Naive thymus-derived CD4-positive, alpha-beta T cell (primary cell): ENCODE measurements at regions of chr2 and their contacts with region 1.

Region 1: DNA sequence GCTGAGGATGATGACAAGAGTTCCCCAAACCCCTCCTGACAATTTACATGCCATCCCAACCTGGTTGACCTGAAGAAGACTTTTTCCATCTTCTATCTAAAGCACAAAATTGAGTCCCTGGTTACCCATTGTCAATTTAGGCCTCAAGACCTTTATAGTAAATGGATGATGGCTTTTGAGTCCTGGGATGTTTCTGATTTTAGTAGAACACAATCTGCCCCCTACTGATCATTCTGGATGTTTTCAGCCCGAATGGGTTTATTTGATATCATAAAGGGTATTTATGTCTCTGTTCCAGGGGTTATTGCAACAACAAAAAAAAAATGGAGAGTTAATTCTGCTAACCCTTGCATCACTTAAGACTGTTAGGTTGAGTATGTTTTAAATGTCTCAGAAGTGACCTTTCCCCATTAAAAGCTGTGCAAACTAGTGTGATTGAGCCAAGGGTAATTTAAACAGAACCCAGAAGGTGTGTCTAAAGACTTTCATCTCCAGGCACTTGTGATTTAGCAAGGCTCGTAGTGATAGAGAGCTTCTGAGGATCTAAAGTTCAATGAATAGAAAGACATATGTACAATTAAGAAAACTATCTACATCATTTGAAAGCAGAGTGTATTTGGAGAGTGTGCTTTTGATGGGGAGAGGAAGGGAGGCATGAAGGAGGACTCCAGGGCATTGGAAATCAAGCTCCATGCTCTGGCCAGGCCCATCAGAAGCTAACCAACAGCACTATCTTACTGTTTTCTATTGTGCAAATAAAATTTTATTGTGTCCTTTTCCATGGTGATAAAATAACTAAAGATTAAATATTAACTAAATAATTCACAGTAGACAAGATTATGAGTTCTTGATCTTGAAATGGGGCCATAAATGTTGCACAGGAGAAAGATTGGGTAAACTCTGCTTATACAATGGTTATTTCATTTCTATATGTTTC is 96.6 kb upstream of the NOSTRIN start:
- DNase-seq: peak in 4 of 9 donors; percentile 4 to 31 (median 16)
- ATAC-seq: no peak
- H3K4me3 ChIP-seq: no peak overlapping the region
- H3K4me3 Mint-ChIP-seq: no peak overlapping the region
- H3K27ac ChIP-seq: no peak overlapping the region
- H3K27ac Mint-ChIP-seq: peak overlapping the region in 2 of 9 donors; percentile 3 to 42
- H3K4me1 ChIP-seq: no peaks in the 10 kb centered on the region
- H3K4me1 Mint-ChIP-seq: peaks cover 0 to 20% (median 13%) of the 10 kb centered on the region in 7 donors
- H3K27me3 ChIP-seq: no peaks in the 10 kb centered on the region
- H3K27me3 Mint-ChIP-seq: no peaks in the 10 kb centered on the region

Region 2: GRCh38 chr2:168256448-168256847 is 449.4 kb before region 1 on chr2:
- CTCF ChIA-PET with region 1: no interaction called
- POLR2A ChIA-PET with region 1: no interaction called
- intact Hi-C with region 1: loop called in 1 of 2 experiments (anchors 5 kb)
- DNase-seq: no peak
- ATAC-seq: no peak
- H3K4me3 ChIP-seq: no peak overlapping the region
- H3K4me3 Mint-ChIP-seq: no peak overlapping the region
- H3K27ac ChIP-seq: no peak overlapping the region
- H3K27ac Mint-ChIP-seq: no peak overlapping the region
- H3K4me1 ChIP-seq: peaks cover 0 to 10% of the 10 kb centered on the region in 2 donors
- H3K4me1 Mint-ChIP-seq: peaks cover 0 to 2% (median 0%) of the 10 kb centered on the region in 7 donors
- H3K27me3 ChIP-seq: no peaks in the 10 kb centered on the region
- H3K27me3 Mint-ChIP-seq: no peaks in the 10 kb centered on the region

Region 3: DNA sequence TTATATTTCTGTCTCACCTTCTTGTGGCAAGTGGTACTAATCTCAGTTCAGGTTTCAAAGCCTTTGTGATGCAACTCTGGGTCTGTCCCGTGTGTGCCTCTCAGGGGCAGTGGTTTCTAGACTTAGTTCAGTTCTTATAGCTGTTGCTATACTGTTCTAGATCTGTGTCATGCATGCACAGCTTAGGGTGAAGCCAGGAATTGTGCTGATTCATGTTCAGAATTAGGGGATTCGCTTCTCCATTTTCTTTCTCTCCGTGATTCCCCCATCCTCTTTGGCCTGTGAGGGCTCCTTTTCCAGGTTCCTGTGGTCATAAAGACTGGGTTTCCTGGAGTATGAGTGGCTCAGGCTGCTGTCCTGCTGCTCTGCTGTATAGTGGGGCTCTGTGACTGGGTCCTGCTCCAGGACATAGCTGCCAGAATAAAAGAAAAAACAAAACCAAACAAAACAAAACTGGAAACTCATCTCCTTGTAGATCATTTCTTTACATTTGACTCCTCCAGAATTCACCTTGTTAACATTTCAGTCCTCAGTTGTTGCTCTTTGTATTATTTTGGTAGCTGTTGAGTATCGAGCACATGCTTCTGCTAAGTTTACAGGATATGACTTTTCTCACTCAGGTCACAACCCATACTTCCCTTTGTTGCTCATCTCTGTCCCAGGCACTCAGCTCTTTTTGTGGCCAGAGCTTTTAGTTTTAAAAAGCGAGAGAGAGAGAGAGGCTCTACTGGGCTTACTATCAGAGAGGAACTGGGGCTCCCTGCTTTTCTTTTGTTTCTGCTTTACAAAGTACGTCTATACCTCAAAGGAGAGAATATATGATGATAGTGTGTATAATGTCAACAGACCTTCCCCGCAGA is 215.6 kb before region 1 on chr2:
- CTCF ChIA-PET with region 1: no interaction called
- POLR2A ChIA-PET with region 1: no interaction called
- intact Hi-C with region 1: no loop called
- DNase-seq: peak in 8 of 9 donors; percentile 38 to 62 (median 44)
- ATAC-seq: peak; percentile 85
- H3K4me3 ChIP-seq: peak overlapping the region; percentile 42
- H3K4me3 Mint-ChIP-seq: peak overlapping the region; percentile 65 to 90 (median 74)
- H3K27ac ChIP-seq: peak overlapping the region; percentile 55
- H3K27ac Mint-ChIP-seq: peak overlapping the region; percentile 77 to 91 (median 88)
- H3K4me1 ChIP-seq: peaks cover 11 to 23% of the 10 kb centered on the region in 2 donors
- H3K4me1 Mint-ChIP-seq: peaks cover 24 to 87% (median 65%) of the 10 kb centered on the region in 7 donors
- H3K27me3 ChIP-seq: no peaks in the 10 kb centered on the region
- H3K27me3 Mint-ChIP-seq: peaks cover 0 to 3% (median 0%) of the 10 kb centered on the region in 5 donors

Region 4: GRCh38 chr2:168912901-168913369 is 207.1 kb after region 1 on chr2:
- CTCF ChIA-PET with region 1: no interaction called
- POLR2A ChIA-PET with region 1: no interaction called
- intact Hi-C with region 1: loop called in 1 of 2 experiments (anchors 10 kb)
- DNase-seq: no peak
- ATAC-seq: peak; percentile 47
- H3K4me3 ChIP-seq: no peak overlapping the region
- H3K4me3 Mint-ChIP-seq: peak overlapping the region in 9 of 10 donors; percentile 18 to 73 (median 32)
- H3K27ac ChIP-seq: no peak overlapping the region
- H3K27ac Mint-ChIP-seq: no peak overlapping the region
- H3K4me1 ChIP-seq: no peaks in the 10 kb centered on the region
- H3K4me1 Mint-ChIP-seq: peaks cover 0 to 15% (median 7%) of the 10 kb centered on the region in 7 donors
- H3K27me3 ChIP-seq: peaks cover 0 to 4% of the 10 kb centered on the region in 2 donors
- H3K27me3 Mint-ChIP-seq: peaks cover 29 to 46% (median 32%) of the 10 kb centered on the region in 5 donors